Mucosa of descending colon (tissue), 3 donors: ENCODE measurements at regions of chr17 and their contacts with region 1.

Region 1: DNA sequence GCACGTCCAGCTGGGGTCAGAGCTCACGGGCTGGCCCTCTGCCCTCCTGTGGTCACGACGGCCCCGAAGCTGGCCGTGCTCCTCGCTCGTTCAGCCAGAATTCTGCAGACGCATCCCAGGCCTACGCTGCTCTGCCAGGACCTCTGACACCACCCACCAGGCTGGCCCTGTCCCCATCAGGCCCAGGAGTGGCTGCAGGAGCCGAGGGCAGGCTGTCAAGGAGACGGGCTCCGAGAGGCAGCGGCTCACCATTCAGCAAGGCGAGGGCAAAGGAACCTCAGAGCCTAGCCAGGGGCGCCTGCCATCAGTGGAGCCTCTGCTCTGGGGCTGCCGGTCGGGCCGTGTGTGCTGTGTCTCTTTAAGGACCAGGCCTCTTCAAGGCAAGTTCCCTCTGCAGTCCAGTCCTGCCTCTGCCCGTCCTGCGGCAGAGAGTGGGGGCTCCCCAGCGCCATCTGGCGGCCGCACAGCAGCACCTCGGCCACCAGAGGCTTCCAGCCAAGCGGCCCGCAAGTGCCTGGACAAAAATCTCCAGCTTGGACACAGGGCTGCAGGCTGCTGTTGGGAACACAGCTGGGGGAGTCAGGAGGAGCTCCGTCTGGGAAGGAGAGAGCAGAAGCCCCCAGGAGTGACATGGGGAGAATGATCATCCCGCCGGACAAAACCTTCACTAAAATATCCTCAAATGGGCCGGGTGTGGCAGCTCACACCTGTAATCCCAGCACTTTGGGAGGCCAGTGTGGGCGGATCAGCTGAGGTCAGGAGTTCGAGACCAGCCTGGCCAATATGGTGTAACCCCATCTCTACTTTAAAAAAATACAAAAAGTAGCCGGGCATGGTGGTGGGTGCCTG is 7.4 kb upstream of the ABR start:
- DNase-seq: peak; percentile 78 to 88 (median 87)
- ATAC-seq: peak; percentile 97
- H3K4me3 ChIP-seq: no peak overlapping the region
- H3K4me1 ChIP-seq: peaks cover 12% of the 10 kb centered on the region
- CTCF ChIP-seq: peak; percentile 99

Region 2: DNA sequence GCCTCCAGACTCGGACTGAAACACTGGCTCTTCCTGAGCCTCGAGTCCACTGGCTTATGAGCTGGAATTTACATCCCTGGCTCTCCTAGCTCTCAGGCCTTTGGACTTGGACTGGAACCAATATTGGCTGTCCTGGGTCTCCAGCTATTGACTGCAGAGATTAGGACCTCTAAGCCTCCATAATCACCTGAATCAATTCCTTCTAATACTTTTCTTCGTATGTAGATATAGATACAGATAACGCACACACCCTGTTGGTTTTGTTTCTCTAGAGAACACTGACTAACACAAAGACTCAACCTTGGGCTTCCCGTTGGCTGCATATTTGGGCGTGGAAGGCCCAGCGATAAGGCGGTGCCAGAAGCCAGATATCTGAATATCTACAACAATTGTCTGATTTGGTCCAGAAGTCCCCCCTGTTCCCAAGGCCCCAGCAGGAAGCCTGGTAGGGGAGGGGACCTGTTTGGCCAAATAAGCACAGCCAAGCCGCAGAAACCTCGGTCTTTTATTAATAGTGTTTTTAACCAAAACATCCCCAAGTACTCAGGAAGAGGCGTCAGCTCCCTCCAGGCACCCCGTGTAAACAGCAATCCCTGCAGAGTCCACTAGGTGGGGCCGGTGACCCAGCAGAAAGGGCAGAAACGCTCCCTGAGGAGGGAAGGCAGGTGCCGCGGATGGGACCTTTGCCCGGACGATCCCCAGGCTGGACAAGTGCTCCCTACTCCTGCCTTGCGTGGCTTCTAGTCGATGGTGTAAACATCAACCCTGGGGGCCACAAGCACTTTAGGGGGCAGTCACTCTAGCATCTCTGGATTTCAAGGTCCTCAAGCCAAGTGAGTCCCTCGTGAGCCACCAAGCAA is 64.4 kb before region 1 on chr17:
- intact Hi-C with region 1: loop called in 1 of 2 experiments (anchors 5 kb)
- DNase-seq: peak; percentile 89 to 96 (median 94)
- ATAC-seq: peak; percentile 95
- H3K4me3 ChIP-seq: no peak overlapping the region
- H3K4me1 ChIP-seq: peaks cover 25% of the 10 kb centered on the region
- CTCF ChIP-seq: peak; percentile 84